Left lung (tissue), 14 donors: ENCODE measurements at regions of chr5 and their contacts with region 1.

Region 1: DNA sequence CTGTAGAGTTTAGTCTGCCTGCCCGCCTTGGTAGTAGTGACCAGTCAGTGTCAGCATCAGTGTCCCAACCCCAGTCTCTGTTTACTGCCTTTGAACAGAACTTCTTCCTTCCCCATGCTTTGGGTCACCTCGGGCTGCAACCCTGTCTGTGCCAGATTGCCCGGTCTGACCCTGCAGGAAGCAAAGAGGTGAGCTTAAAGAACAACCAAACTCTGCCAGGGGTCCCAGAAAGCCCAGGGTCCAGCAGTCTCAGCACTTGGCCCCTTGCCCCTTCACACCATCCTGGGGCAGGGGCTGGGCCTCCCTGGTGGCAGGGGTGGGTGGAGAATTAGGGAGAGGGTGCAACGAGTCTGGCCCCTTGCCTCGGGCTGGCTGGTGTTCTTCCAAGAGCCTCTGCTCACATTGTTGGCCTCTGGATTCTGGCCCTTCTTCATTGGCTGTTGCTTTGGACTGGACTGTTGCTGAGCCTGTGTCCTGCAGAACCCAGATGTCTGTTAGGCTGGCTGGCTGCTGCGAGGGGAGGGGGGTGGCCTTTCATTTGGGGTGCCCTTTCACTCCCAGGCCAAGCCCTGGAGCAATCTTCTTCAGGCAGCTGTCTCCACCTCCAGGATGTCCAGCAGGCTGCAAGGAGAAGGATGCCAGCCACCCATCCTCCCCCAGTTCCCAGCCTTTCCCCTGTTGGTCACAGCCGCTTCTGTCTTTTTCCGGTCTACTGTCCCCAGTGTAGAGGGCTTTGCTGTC is 51.2 kb downstream of the SAR1B start:
- DNase-seq: no peak
- ATAC-seq: no peak
- H3K4me3 ChIP-seq: no peak overlapping the region
- H3K27ac ChIP-seq: peak overlapping the region in 1 of 2 donors; percentile 39
- H3K4me1 ChIP-seq: peaks cover 0 to 31% of the 10 kb centered on the region in 2 donors
- H3K27me3 ChIP-seq: no peaks in the 10 kb centered on the region
- CTCF ChIP-seq: no peak

Region 2: DNA sequence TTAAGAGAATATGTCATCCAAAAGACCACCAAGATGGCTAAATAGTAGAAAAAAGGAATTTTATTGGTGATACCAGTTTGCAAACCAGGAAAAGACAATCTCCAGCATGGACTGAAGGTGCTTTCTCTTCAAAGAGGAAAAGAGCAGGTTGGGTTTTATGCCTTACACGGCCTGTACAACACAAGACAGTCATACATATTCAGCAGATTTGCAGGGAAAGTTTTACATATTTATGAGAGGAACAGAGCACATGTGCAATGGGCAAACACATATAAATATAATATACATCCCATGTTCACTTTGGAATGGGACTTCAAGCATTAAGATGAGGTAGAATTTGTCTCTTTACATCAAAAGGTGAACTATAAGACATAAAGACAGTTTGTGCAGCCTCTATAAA is 285.2 kb before region 1 on chr5:
- intact Hi-C with region 1: loop called in 1 of 2 experiments (anchors 5 kb)
- DNase-seq: no peak
- ATAC-seq: no peak
- H3K4me3 ChIP-seq: no peak overlapping the region
- H3K27ac ChIP-seq: no peak overlapping the region
- H3K4me1 ChIP-seq: no peaks in the 10 kb centered on the region
- H3K27me3 ChIP-seq: no peaks in the 10 kb centered on the region
- CTCF ChIP-seq: no peak

Region 3: GRCh38 chr5:134648425-134649162 is 67.2 kb after region 1 on chr5 and contains the start of gene SEC24A:
- intact Hi-C with region 1: no loop called
- DNase-seq: peak; percentile 85 to 98 (median 91)
- ATAC-seq: peak; percentile 95
- H3K4me3 ChIP-seq: peak within 1 kb of the TSS; percentile 87 to 95
- H3K27ac ChIP-seq: peak within 1 kb of the TSS; percentile 97 to 98
- H3K4me1 ChIP-seq: peaks cover 10 to 45% of the 10 kb centered on the region in 2 donors
- H3K27me3 ChIP-seq: no peaks in the 10 kb centered on the region
- CTCF ChIP-seq: no peak
- polyA plus RNA-seq, gene SEC24A: 17.5 to 23.3 (median 21.5) TPM